ENCODE measurements at regions of chr14 and their contacts with region 1.

Region 1: GRCh38 chr14:94548999-94549985 is 11.9 kb upstream of the SERPINA4 start:
- DNase-seq: peak; percentile 56
- ATAC-seq: peak; percentile 88
- H3K4me3 ChIP-seq: peak overlapping the region; percentile 20 to 58 (median 20); a peak in 4 of 6 replicates
- H3K27ac ChIP-seq: no peak overlapping the region
- H3K4me1 ChIP-seq: peaks cover 73% of the 10 kb centered on the region
- H3K27me3 ChIP-seq: no peaks in the 10 kb centered on the region
- CTCF ChIP-seq: peak; percentile 90
- EP300 ChIP-seq: no peak
- POLR2A ChIP-seq: no peak
- RAD21 ChIP-seq: peak; percentile 84

Region 2: GRCh38 chr14:92706406-92706805 is 1842.9 kb before region 1 on chr14:
- CTCF ChIA-PET with region 1: no interaction called
- POLR2A ChIA-PET with region 1: no interaction called
- in situ Hi-C with region 1: no loop called
- intact Hi-C with region 1: no loop called
- DNase-seq: no peak
- ATAC-seq: no peak
- H3K4me3 ChIP-seq: no peak overlapping the region
- H3K27ac ChIP-seq: no peak overlapping the region
- H3K4me1 ChIP-seq: peaks cover 13% of the 10 kb centered on the region
- H3K27me3 ChIP-seq: no peaks in the 10 kb centered on the region; a peak in 1 of 5 replicates
- CTCF ChIP-seq: no peak
- EP300 ChIP-seq: no peak
- POLR2A ChIP-seq: no peak
- RAD21 ChIP-seq: no peak

Region 3: DNA sequence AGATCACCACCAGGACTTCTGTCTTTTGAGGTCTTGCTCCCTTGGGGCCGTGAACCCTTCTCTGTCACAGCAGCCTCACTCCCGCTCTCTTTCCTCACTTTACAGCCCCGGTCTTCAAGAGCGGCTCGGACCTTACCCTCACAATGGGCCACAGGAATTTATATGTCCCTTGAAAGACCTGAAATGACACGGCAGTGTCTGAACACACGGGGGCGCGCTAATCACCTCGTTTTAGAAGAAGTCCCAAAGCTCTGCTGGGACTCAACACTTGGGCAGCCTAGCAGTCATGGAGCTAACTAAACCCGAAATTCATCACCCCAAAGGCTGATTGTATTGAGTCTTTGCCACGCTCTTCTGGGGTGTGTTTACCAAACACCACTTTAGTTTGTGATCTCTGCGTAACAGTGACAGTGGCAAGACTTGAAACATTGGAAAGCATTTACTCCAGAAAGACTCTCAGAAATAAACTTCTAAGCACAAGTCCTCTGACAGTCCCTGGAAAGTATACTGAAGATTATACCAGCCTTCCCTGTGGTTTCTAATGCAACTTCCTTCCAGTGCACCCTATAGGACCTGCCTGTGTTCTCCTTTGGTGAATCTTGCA is 125.7 kb before region 1 on chr14:
- CTCF ChIA-PET with region 1: interaction called, 5 read pairs
- POLR2A ChIA-PET with region 1: interaction called, 4 read pairs
- in situ Hi-C with region 1: loop called (anchors 5 kb)
- intact Hi-C with region 1: loop called (anchors 1 kb)
- DNase-seq: peak; percentile 80
- ATAC-seq: peak; percentile 91
- H3K4me3 ChIP-seq: 0 out of 6 replicates have a peak overlapping the region, but pooled peaks of 1 of the 3 experiments have one; percentile 38
- H3K27ac ChIP-seq: no peak overlapping the region
- H3K4me1 ChIP-seq: peaks cover 32% of the 10 kb centered on the region
- H3K27me3 ChIP-seq: no peaks in the 10 kb centered on the region
- CTCF ChIP-seq: peak; percentile 90
- EP300 ChIP-seq: no peak
- POLR2A ChIP-seq: no peak
- RAD21 ChIP-seq: peak; percentile 76

Region 4: GRCh38 chr14:94517641-94518257 is 31.5 kb before region 1 on chr14:
- CTCF ChIA-PET with region 1: no interaction called
- POLR2A ChIA-PET with region 1: interaction called, 11 read pairs
- in situ Hi-C with region 1: no loop called
- intact Hi-C with region 1: no loop called
- DNase-seq: peak; percentile 77
- ATAC-seq: peak; percentile 9; the same call in 2 of the 3 replicates
- H3K4me3 ChIP-seq: peak overlapping the region in 1 of 3 experiments; percentile 14; a peak in 1 of 6 replicates
- H3K27ac ChIP-seq: peak overlapping the region; percentile 44
- H3K4me1 ChIP-seq: peaks cover 92% of the 10 kb centered on the region
- H3K27me3 ChIP-seq: no peaks in the 10 kb centered on the region
- CTCF ChIP-seq: no peak
- EP300 ChIP-seq: peak in 1 of 2 experiments; percentile 80; a peak in 2 of 4 replicates
- POLR2A ChIP-seq: no peak
- RAD21 ChIP-seq: no peak

Region 5: GRCh38 chr14:94581127-94581999 is 32.1 kb after region 1 on chr14 and contains the start of gene SERPINA5:
- CTCF ChIA-PET with region 1: no interaction called
- POLR2A ChIA-PET with region 1: interaction called, 16 read pairs
- in situ Hi-C with region 1: no loop called
- intact Hi-C with region 1: no loop called
- DNase-seq: peak; percentile 83
- ATAC-seq: peak; percentile 95
- H3K4me3 ChIP-seq: peak within 1 kb of the TSS; percentile 61 to 88 (median 75)
- H3K27ac ChIP-seq: peak within 1 kb of the TSS; percentile 88
- H3K4me1 ChIP-seq: peaks cover 75% of the 10 kb centered on the region
- H3K27me3 ChIP-seq: no peaks in the 10 kb centered on the region; a peak in 1 of 5 replicates
- CTCF ChIP-seq: peak; percentile 54
- EP300 ChIP-seq: peak in 1 of 2 experiments; percentile 46; a peak in 2 of 4 replicates
- POLR2A ChIP-seq: peak; percentile 83 to 92
- RAD21 ChIP-seq: peak; percentile 37; the same call in 1 of the 2 replicates
- total RNA-seq, gene SERPINA5: 237 and 498 TPM in 2 replicates

Region 6: GRCh38 chr14:94689218-94689984 is 140.1 kb after region 1 on chr14:
- CTCF ChIA-PET with region 1: no interaction called
- POLR2A ChIA-PET with region 1: no interaction called
- in situ Hi-C with region 1: loop called (anchors 10 kb)
- intact Hi-C with region 1: loop called (anchors 5 kb)
- DNase-seq: no peak
- ATAC-seq: peak; percentile 93
- H3K4me3 ChIP-seq: peak overlapping the region in 2 of 3 experiments; percentile 18 to 21; a peak in 2 of 6 replicates
- H3K27ac ChIP-seq: no peak overlapping the region
- H3K4me1 ChIP-seq: peaks cover 21% of the 10 kb centered on the region
- H3K27me3 ChIP-seq: peaks cover 13 to 55% of the 10 kb centered on the region in 2 experiments
- CTCF ChIP-seq: peak; percentile 93
- EP300 ChIP-seq: no peak
- POLR2A ChIP-seq: no peak
- RAD21 ChIP-seq: peak; percentile 97

Measured in HepG2 (cell line).